Lower leg skin (tissue), 4 donors: ENCODE measurements at regions of chr14 and their contacts with region 1.

Region 1: DNA sequence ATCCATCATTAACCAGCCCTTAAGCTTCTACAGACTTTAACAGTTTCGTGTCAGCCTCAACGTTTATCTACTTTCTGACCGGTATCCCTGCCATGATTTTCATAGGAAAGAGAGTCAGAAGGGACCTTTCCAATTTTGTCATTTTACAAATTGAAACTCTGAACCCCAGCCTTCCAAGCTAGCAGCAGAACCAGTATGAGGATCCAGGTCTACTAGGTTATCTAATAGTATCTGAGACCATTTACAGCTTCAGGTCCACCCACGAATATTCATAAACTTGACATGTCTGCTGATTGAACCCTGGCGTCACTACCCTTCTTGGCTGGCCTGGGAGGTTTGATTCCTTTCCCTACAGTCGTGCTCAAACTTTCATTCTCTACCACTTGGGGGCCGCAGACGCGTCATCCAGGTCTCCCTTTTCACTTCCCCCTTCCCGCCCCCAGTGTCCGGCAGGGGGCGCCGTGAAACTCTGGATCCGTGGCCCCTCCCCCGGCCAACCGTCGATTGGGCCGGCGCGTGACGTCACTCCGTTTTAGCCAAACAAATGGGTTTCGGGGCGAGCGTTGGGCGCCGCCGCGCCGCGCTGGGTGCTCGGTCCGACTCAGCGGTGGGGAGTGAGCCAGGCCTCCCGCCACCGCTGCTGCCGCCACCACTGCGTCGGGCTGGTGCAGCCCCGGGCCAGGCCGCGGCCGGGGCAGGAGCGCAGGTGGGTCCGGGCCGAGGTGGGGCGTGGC is at the start of gene FBXO34:
- DNase-seq: peak; percentile 99 to 100
- H3K4me3 ChIP-seq: peak within 1 kb of the TSS; percentile 73
- CTCF ChIP-seq: peak in 1 of 3 donors; percentile 98
- POLR2A ChIP-seq: peak in 1 of 2 donors; percentile 35
- total RNA-seq, gene FBXO34: 29.7 to 48.1 (median 37.3) TPM

Region 2: DNA sequence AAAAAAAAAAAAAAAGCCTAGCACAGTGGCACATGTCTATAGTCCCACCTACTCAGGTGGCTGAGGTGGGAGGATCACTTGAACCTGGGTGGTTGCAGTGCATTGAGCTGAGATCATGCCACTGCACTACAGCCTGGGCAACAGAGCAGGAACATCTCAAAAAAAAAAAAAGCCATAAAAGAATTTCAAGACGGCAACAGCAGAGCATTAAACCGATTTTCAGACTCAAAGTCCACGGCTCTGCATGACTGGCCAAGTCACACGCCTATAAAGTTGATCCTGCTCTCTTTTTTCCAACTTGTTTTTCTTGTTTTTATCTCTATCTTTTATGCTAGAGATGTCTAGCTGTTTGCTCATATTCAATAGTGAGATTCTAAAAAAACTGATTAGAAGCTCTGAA is 45.6 kb after region 1 on chr14:
- intact Hi-C with region 1: no loop called
- DNase-seq: no peak
- H3K4me3 ChIP-seq: no peak overlapping the region
- CTCF ChIP-seq: no peak
- POLR2A ChIP-seq: no peak

Region 3: GRCh38 chr14:55333711-55334485 is 62.9 kb after region 1 on chr14:
- intact Hi-C with region 1: no loop called
- DNase-seq: no peak
- H3K4me3 ChIP-seq: no peak overlapping the region
- CTCF ChIP-seq: no peak
- POLR2A ChIP-seq: no peak

Region 4: GRCh38 chr14:55430024-55430690 is 159.2 kb after region 1 on chr14:
- intact Hi-C with region 1: loop called (anchors 10 kb)
- DNase-seq: peak in 1 of 2 donors; percentile 62
- H3K4me3 ChIP-seq: no peak overlapping the region
- CTCF ChIP-seq: no peak
- POLR2A ChIP-seq: no peak